Mammary epithelial cell (primary cell): ENCODE measurements at regions of chr1 and their contacts with region 1.

Region 1: DNA sequence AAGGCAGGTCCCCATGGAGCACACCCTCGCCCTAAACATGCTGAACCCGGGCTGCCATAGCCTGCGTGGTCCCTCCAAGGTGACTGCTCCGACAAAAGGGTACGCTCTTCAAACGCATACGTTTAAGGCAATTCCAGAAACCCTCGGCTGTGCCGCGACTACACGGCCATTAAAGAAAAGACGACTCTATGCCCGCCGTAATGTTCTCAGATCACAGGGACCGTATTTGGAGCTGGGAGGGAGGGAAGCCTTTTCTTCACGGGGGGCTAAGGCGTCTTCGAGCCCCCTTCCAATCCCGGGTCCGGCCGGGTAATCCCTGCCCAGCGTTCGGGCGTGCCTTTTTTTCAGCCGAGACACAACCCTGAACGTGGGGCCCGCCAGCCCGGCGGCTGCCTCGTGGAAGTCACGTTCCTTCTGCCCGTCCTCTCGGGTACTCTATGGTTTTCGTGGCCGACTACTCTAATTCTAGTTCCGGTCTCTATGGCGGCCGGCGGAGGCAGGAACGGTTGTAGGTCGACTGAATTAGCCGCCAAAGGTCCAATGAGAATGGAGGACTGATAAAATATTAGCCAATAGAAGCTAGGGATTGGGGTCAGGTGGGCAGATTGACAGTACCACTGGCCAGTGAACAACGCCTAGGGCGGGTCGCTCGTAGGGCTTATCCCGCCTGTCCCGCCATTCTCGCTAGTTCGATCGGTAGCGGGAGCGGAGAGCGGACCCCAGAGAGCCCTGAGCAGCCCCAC is at the start of gene YBX1:
- DNase-seq: peak; percentile 98
- H3K4me3 ChIP-seq: peak within 1 kb of the TSS; percentile 67 to 86 (median 76)
- H3K27ac ChIP-seq: peak within 1 kb of the TSS; percentile 80
- H3K4me1 ChIP-seq: peaks cover 36% of the 10 kb centered on the region
- H3K27me3 ChIP-seq: no peaks in the 10 kb centered on the region
- CTCF ChIP-seq: no peak
- total RNA-seq, gene YBX1: 442 to 862 TPM

Region 2: GRCh38 chr1:42657971-42658879 is 23.7 kb before region 1 on chr1 and contains the start of gene PPIH:
- CTCF ChIA-PET with region 1: no interaction called
- dilution Hi-C with region 1: no loop called
- in situ Hi-C with region 1: no loop called
- intact Hi-C with region 1: loop called (anchors 1 kb)
- DNase-seq: peak; percentile 90
- H3K4me3 ChIP-seq: peak within 1 kb of the TSS; percentile 47 to 86 (median 73)
- H3K27ac ChIP-seq: peak within 1 kb of the TSS; percentile 42
- H3K4me1 ChIP-seq: peaks cover 19% of the 10 kb centered on the region
- H3K27me3 ChIP-seq: no peaks in the 10 kb centered on the region
- CTCF ChIP-seq: peak in 1 of 2 donors; percentile 40
- total RNA-seq, gene PPIH: 17.5 to 45.1 TPM

Region 3: DNA sequence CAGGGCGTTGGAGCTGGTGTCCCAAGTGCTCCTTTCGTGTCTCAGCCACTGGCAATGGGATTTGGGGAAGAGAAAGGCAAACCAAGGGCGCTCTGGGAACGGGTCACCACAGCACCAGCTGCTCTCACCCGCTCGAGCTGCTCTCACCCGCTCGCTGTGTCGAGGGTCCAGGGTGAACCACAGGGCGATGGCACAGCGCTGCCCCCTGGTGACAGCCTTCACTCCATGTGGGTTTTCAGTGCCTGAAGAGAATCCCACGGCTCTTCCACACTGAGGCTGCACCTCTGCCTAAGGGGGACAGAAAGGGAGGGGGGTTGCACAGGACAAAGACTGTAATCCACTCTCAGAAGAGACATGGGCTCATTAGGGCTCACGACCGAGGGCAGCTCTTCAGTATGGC is 65.2 kb after region 1 on chr1:
- CTCF ChIA-PET with region 1: no interaction called
- dilution Hi-C with region 1: loop called (anchors 5 kb)
- in situ Hi-C with region 1: no loop called
- intact Hi-C with region 1: loop called (anchors 2 kb)
- DNase-seq: no peak
- H3K4me3 ChIP-seq: no peak overlapping the region
- H3K27ac ChIP-seq: no peak overlapping the region
- H3K4me1 ChIP-seq: peaks cover 17% of the 10 kb centered on the region
- H3K27me3 ChIP-seq: no peaks in the 10 kb centered on the region
- CTCF ChIP-seq: peak; percentile 43 to 79

Region 4: DNA sequence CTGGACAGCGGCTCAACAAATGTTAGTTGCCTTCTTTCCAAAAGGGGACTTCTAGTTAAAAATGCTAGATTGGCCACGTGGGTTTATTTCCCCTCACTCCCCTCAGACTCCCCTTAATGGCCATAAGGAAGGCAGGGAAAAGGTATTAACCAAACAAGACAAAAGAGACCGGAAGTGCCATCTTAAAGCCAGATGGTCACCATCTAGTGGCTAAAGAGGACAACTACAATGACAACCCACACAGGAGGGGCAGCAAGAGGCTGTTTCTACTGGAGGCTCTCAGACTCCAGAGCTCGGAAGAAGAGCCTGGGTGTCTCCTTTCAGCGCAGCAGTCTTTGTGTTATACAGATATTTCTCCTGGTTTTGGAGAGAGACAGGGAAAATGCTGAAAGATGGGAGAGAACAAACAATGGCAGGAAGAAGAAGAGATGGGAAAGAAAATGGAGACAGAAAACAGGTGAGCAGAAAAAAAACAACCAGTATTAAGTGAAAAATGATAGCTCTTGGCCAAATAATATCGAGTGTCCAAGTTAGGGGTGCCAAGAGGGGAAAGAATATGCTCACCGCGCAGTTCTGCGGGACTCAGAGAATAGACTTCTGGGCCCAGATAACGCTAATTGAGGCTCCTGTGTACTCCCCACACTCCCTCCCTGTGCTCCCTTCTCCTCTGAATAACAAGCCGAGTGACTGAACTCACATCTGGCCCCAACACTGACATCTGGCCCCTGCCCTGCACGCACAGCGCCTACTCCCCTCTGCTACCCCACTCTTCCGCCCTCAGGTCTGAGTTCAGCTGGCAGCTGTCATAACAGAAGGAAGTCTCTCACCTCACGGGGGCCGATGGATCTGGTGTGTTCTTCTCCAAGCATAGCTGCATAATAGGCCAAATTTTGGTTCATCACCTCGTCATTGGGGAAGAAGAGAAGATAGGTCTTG is 75.3 kb after region 1 on chr1:
- CTCF ChIA-PET with region 1: no interaction called
- dilution Hi-C with region 1: no loop called
- in situ Hi-C with region 1: no loop called
- intact Hi-C with region 1: loop called (anchors 2 kb)
- DNase-seq: peak; percentile 49
- H3K4me3 ChIP-seq: no peak overlapping the region
- H3K27ac ChIP-seq: no peak overlapping the region
- H3K4me1 ChIP-seq: peaks cover 8% of the 10 kb centered on the region
- H3K27me3 ChIP-seq: no peaks in the 10 kb centered on the region
- CTCF ChIP-seq: peak; percentile 70 to 80

Region 5: DNA sequence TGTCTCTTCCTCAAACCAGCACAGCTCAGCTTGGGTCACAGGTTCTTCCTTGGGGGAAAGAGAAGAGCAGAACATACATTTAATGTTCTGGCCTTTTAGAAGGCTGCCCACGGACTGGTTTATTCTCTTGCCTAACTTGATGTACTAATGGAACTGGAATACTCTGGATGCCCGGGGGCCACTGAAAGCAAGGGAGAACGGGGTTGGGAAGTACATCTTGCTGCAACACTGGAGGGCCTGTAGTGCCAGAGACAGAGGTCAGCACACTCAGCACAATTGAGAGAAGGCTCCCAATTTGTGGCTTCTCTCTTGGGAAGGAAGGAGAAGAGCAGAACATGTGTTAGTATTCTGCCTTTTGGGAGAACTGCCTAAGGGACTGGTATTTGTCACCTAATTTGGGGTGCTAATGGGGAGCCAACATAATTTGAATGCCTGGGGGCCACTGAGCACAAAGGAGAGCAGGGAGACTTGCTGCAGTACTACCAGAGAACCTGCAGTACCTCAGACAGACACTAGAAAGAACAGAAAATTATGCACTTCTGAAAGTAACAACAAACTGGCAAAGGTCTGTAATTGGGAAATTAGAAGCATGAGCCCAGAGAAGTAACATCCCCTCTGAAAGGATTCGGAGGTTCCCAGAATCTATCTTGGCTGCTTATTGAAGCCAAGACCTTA is 178.6 kb after region 1 on chr1:
- CTCF ChIA-PET with region 1: no interaction called
- dilution Hi-C with region 1: no loop called
- in situ Hi-C with region 1: no loop called
- intact Hi-C with region 1: no loop called
- DNase-seq: no peak
- H3K4me3 ChIP-seq: no peak overlapping the region
- H3K27ac ChIP-seq: no peak overlapping the region
- H3K4me1 ChIP-seq: no peaks in the 10 kb centered on the region
- H3K27me3 ChIP-seq: no peaks in the 10 kb centered on the region
- CTCF ChIP-seq: peak in 1 of 2 donors; percentile 21